ENCODE measurements at regions of chr3 and their contacts with region 1.

Region 1: GRCh38 chr3:69324362-69325025 is 61.4 kb downstream of the FRMD4B start:
- DNase-seq: no peak
- H3K4me3 Mint-ChIP-seq: no peak overlapping the region
- H3K27ac Mint-ChIP-seq: peak overlapping the region; percentile 72
- H3K4me1 Mint-ChIP-seq: peaks cover 52% of the 10 kb centered on the region
- H3K27me3 Mint-ChIP-seq: no peaks in the 10 kb centered on the region

Region 2: DNA sequence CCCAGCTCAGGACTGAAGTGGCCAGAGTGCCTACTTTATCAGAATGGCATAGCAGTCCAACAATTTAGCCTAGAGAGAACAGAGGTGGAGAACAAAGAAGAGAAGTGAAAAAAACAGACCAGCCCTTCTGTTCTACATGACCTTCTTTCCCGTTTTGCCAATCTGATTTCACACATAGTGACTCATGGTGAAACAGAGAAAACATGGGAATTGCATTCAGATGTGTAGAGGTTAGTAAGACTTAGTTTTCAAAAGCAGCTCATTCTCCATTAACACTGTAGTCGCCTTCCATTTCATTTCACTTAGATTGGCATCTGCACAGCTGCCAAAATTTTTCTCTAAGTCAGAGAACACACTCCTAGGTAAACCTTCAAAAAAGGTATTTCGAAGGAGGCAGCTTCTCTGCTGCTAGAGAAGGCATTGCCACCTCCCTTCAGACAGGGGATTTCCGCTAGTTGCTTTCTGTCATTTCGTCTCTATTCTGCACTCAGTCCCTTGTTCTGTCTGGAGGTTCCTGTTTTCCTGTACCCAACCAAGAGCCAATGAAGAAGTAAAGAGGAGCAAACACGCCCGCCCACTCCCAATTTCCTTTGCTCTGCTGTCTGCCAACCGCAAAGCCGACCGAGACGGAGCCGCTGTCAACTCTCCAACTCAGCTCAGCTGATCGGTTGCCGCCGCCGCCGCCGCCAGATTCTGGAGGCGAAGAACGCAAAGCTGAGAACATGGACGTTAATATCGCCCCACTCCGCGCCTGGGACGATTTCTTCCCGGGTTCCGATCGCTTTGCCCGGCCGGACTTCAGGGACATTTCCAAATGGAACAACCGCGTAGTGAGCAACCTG is 239.9 kb before region 1 on chr3 and contains the start of gene ARL6IP5:
- intact Hi-C with region 1: loop called (anchors 1 kb)
- DNase-seq: peak; percentile 89
- H3K4me3 Mint-ChIP-seq: peak within 1 kb of the TSS; percentile 96
- H3K27ac Mint-ChIP-seq: peak within 1 kb of the TSS; percentile 98
- H3K4me1 Mint-ChIP-seq: peaks cover 53% of the 10 kb centered on the region
- H3K27me3 Mint-ChIP-seq: no peaks in the 10 kb centered on the region
- total RNA-seq, gene ARL6IP5: 124 and 127 TPM in 2 replicates

Region 3: GRCh38 chr3:69288161-69288895 is 36.2 kb before region 1 on chr3:
- intact Hi-C with region 1: loop called (anchors 1 kb)
- DNase-seq: no peak
- H3K4me3 Mint-ChIP-seq: peak overlapping the region; percentile 20
- H3K27ac Mint-ChIP-seq: peak overlapping the region; percentile 53
- H3K4me1 Mint-ChIP-seq: peaks cover 30% of the 10 kb centered on the region
- H3K27me3 Mint-ChIP-seq: no peaks in the 10 kb centered on the region

Region 4: DNA sequence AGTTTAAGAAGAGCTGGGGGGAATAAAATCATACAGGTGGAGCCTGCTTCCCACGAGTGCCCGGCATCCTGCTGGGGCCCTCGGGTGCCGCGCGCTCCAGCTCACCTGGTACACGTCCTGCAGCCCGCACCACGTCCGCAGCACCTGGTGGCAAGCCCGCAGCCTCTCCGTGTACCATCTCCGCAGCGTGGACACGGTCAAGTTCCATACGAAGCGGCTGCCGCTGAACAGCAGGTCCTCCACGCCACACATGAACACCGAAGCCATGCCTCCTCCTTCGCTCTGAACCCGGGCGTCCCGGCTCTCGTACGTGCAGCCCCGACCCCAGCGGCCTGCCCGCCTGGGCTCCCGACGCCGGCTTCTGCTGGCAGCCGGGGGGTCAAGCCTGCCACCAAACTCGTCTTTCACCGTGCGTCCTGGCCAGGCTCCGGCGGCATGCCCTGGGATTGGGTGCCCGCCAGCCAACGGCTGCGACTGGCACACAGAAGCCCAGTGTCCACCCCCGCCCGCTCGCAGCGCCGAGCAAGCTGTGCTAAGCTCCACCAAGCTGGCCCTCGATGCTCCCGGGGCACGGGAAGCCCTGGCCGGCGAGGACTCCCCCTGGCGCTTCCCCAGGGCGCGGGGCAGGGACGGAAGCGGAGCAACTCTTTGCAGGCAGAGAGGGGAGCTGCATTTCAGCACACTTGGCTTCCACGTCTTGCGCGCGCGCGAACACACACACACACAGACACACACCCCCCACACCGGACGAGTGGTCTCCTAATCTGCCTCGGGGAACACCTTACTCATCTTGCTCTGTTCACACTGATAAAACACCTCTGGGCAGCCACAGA is 61.4 kb after region 1 on chr3 and contains the start of gene FRMD4B:
- intact Hi-C with region 1: loop called (anchors 1 kb)
- DNase-seq: peak; percentile 24
- H3K4me3 Mint-ChIP-seq: peak within 1 kb of the TSS; percentile 69
- H3K27ac Mint-ChIP-seq: no peak within 1 kb of the TSS
- H3K4me1 Mint-ChIP-seq: peaks cover 7% of the 10 kb centered on the region
- H3K27me3 Mint-ChIP-seq: peaks cover 63% of the 10 kb centered on the region
- total RNA-seq, gene FRMD4B: 75.1 and 78.0 TPM in 2 replicates

Region 5: GRCh38 chr3:69433969-69434325 is 109.5 kb after region 1 on chr3:
- intact Hi-C with region 1: loop called (anchors 1 kb)
- DNase-seq: no peak
- H3K4me3 Mint-ChIP-seq: no peak overlapping the region
- H3K27ac Mint-ChIP-seq: peak overlapping the region; percentile 54
- H3K4me1 Mint-ChIP-seq: peaks cover 41% of the 10 kb centered on the region
- H3K27me3 Mint-ChIP-seq: no peaks in the 10 kb centered on the region

Region 6: GRCh38 chr3:69491975-69492374 is 167.5 kb after region 1 on chr3:
- intact Hi-C with region 1: no loop called
- DNase-seq: no peak
- H3K4me3 Mint-ChIP-seq: no peak overlapping the region
- H3K27ac Mint-ChIP-seq: no peak overlapping the region
- H3K4me1 Mint-ChIP-seq: no peaks in the 10 kb centered on the region
- H3K27me3 Mint-ChIP-seq: peaks cover 4% of the 10 kb centered on the region

Measured in activated T-helper 2 cell treated with anti-CD3 and anti-CD28 coated beads, Interferon-gamma antibody, Interleukin-2, Interleukin-4, amounts not matched to agents 10 μg/mL and 5 μg/mL and 100 μg/mL, durations not matched to agents 14 hours and 24 hours and 36 hours (primary cell).